ENCODE measurements at regions of chr22 and their contacts with region 1.

Region 1: DNA sequence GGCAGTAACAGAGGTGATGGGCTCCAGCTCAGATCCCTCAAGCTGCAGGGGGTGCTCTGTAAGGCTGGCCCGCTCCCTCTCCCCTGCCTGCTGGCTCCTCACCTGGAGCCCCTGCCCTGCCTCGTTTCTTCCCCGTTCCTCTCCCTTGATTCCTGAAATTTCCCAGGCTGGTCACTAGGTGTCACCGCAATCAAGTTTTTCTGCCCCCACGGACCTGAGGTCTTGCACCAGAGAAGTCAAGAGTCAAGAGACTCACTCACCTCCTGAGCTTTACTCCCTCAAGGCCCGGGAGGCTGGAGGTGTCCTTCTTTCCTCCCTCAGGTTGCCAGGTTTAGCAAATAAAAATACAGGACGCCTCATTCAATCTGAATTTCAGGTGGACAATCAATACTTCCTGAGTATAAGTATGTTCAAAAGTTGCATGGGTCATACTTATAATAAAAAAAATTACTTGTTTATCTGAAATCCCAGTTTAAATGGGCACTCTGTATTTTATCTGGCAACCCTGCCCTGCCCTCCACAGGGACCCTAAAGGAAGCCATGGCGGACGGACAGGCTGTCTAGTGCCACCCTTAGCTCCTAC is 69.2 kb downstream of the SCUBE1 start:
- DNase-seq: no peak
- ATAC-seq: peak; percentile 71

Region 2: GRCh38 chr22:43333156-43333555 is 59.2 kb after region 1 on chr22:
- intact Hi-C with region 1: no loop called
- DNase-seq: no peak
- ATAC-seq: no peak

Region 3: DNA sequence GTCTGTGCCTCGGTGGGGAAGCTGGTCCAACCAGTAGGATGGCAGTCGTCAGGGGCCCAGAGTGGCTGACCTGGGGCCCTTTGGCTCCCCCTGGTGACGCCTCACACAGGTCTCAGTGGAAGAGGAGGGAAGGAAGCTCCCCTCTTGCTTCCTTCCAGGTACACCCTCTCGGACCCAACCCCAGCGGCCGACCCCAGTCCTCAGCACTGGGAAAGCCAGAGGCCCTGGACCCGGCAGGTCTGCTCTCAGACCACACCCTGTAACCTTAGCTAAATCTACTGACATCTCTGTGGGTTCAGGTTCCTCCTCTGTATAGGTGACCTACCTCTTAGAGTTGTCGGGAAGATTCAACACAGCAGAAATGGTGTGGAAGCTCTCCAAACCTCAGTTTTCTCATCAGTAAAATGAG is 72.5 kb after region 1 on chr22:
- intact Hi-C with region 1: loop called in 1 of 2 experiments (anchors 5 kb)
- DNase-seq: peak; percentile 40 to 76
- ATAC-seq: peak; percentile 76

Region 4: GRCh38 chr22:43424666-43425630 is 151.0 kb after region 1 on chr22:
- intact Hi-C with region 1: no loop called
- DNase-seq: no peak
- ATAC-seq: no peak

Measured in left colon (tissue), 2 donors.